ENCODE measurements at regions of chr12 and their contacts with region 1.

Region 1: DNA sequence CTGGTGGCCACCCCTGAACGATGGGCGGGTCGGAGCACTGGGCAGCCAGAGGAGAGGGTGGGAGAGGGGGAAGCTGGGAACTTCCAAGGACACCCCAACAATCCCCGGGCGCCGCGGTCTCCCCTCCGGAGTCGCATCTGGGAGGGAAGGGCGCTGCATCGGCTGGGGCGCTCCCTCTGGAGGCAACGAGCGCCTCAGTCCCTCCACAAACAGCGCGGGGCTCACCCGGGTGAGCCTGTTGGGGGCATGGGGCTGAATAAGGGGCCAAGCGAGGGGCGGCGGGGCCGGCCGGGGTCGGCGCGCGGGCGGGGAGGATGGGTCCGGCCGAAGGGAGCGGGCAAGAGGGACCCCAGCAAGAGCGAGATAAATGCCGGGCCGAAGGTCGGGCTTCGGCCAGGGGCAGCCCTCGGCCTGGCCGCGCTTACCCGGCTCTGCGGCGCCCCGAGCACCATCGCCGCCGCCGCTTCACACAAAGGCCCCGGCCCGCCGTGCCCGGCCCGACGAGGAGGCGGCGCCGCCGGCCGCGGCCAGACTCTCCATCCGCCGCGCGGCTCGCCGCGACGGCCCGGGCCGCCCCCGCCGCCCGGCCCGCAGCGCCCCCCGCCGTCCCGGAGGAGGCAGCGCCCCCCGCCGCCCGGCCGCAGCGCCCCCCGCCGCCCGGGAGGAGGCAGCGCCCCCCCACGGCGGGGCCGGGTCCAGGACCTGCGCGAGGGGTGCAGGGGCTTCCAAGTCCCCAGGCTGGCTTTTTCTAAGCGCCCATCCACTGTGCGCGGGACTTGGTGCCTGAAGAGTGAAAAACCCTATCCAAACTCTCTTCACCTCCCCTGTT is at the start of gene ZBTB39:
- H3K4me3 ChIP-seq: peak within 1 kb of the TSS; percentile 81
- H3K27ac ChIP-seq: peak within 1 kb of the TSS; percentile 54; the same call in 1 of the 2 replicates
- H3K4me1 ChIP-seq: peaks cover 4% of the 10 kb centered on the region; the same call in 1 of the 2 replicates
- CTCF ChIP-seq: peak; percentile 40; the same call in 1 of the 2 replicates

Region 2: GRCh38 chr12:56763753-56764657 is 242.2 kb before region 1 on chr12:
- CTCF ChIA-PET with region 1: interaction called, 117 read pairs
- POLR2A ChIA-PET with region 1: no interaction called
- H3K4me3 ChIP-seq: no peak overlapping the region
- H3K27ac ChIP-seq: no peak overlapping the region
- H3K4me1 ChIP-seq: no peaks in the 10 kb centered on the region
- CTCF ChIP-seq: no peak

Region 3: DNA sequence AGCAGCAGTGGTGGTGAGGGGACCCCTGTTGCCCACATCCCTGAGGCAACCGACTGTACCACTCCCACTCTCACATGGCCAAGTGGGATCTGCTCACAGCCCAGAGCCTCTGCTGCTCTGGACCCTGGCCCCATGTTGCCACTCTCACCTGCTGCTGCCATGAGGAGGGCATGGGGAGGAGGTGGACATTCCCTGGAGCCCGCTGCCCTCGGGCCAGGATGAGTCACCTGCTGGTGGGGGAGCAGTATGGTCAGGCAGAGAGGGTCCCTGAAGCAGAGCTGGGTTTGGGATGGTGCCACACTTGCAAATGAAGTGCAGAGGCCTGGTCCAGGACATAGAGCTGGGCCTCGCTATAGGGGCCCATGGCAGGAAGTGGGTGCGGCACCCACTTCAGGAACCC is 98.1 kb before region 1 on chr12:
- CTCF ChIA-PET with region 1: no interaction called
- POLR2A ChIA-PET with region 1: no interaction called
- H3K4me3 ChIP-seq: no peak overlapping the region
- H3K27ac ChIP-seq: no peak overlapping the region
- H3K4me1 ChIP-seq: no peaks in the 10 kb centered on the region
- CTCF ChIP-seq: no peak

Region 4: DNA sequence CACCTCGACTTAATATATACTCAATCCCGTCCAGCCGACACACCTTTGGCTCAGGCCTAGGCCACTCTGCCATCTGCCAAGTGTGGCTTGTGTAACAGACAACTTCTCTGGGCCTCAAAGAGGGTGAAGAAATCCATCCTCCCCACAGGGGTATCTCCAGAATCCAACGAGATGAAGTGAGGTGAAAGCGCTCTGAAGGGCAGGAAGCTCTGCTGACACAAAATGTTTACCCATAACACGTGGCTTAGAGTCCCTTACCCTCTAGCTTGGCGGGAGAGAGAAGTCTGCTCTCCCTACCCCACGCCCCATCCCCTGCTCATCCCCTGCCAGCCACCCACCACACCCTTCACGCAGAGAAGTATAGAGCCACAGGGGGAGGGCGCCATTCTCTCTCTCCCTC is 12.8 kb before region 1 on chr12:
- CTCF ChIA-PET with region 1: interaction called, 82 read pairs
- POLR2A ChIA-PET with region 1: no interaction called
- H3K4me3 ChIP-seq: no peak overlapping the region
- H3K27ac ChIP-seq: no peak overlapping the region
- H3K4me1 ChIP-seq: no peaks in the 10 kb centered on the region
- CTCF ChIP-seq: no peak

Region 5: DNA sequence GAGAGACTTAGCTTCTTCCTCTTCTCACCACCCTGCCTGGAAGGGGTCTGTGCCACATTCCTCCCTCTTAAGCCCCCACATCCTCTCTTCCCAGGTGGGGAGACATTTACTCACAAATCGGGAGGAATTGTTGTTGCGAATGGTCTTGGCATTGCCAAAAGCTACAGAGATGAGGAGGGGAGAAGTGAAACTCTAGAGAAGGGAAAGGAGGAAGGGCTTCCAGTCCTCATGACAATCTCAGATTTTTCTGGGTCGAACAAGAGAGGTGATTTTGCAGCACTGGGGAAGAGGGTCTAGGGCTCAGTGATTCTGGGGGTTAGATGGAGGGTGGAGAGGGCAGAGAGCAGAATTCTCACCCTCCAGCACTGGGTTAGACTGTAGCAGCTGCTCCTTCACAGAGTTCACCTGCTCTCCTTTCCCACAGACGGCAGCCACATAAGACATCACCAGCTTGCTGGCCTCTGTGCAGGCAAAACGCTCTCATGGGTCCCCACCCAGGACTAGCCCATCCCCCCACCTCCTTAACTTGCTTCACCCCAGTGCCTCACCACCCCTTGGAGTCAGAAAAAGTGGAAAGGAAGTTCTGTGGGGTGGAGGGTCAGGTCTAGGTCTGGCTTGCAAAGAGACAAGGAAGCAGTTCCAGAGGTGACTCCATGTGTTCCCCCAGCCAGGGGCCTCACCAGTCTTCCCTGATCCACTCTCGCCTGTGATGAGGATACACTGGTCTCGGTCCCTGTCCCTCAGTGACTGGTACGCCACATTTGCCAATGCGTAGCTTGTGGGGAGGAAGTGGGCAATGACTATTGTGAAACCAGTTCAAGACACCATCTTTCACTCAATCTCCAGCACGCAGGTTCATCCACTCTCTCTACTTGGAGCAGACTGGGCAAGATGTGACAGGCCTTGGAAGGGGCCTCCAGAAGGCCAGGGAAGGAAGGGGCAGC is 41.0 kb after region 1 on chr12:
- CTCF ChIA-PET with region 1: interaction called, 15 read pairs
- POLR2A ChIA-PET with region 1: no interaction called
- H3K4me3 ChIP-seq: no peak overlapping the region
- H3K27ac ChIP-seq: no peak overlapping the region
- H3K4me1 ChIP-seq: no peaks in the 10 kb centered on the region
- CTCF ChIP-seq: no peak

Region 6: DNA sequence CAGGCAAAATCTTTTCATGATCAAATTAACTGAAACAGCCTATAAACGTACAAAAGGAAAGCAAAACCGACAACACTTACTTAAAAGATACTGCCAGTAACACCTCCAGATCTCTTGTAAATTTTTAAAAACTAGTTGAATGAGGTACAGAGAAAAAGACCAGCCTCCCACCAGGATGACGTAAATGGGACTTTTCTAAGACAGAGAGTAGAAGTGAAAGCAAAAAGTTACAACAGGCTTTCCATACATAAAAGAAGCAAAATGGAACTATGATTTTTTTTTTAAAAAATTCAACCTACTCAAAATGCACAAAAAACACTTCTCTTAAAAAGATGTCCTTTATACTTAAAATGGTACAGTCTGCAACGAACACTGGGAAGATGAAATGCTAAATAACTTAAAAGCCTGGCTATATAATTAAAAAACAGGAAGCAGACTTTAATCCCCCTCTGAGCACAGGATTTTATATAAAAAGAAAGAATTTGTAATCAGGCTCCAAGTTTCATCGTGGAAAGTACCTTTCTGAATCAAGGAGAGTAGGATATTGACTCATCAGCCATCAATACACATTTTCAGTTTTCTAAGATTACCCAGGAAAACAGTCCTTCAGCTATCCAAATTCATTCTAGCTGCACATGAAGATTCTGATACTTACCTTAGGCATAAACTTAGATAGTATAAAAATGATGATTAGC is 57.9 kb after region 1 on chr12:
- CTCF ChIA-PET with region 1: interaction called, 74 read pairs
- POLR2A ChIA-PET with region 1: interaction called, 7 read pairs
- H3K4me3 ChIP-seq: no peak overlapping the region
- H3K27ac ChIP-seq: no peak overlapping the region
- H3K4me1 ChIP-seq: no peaks in the 10 kb centered on the region
- CTCF ChIP-seq: no peak

Region 7: DNA sequence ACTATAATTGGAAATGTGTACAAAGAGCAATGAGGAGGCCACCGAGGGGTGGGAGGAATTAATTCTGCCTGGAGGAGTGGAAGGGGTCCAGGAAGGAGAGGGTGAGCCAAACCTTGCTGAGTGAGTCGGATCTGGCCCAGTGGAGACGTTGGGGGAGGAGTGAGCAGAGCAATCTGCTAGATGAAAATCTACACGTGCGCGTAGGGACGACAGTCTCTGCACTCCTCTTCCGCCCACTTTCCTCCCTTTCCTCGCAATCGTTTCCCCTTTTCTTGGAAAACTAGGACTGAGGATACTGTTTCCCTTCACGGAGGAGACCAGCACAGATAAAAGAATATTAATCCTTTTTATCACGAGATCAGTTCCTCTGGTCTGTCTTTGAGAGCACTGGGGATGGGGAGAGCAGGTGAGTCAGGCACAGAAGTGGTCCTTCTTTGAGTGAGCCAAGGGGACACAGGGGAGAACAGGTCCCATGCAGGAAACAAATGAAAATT is 79.9 kb after region 1 on chr12:
- CTCF ChIA-PET with region 1: no interaction called
- POLR2A ChIA-PET with region 1: no interaction called
- H3K4me3 ChIP-seq: peak overlapping the region; percentile 4; the same call in 1 of the 2 replicates
- H3K27ac ChIP-seq: peak overlapping the region; percentile 86
- H3K4me1 ChIP-seq: peaks cover 12% of the 10 kb centered on the region
- CTCF ChIP-seq: no peak

Region 8: GRCh38 chr12:57101844-57102695 is 95.9 kb after region 1 on chr12:
- CTCF ChIA-PET with region 1: interaction called, 10 read pairs
- POLR2A ChIA-PET with region 1: no interaction called
- H3K4me3 ChIP-seq: no peak overlapping the region
- H3K27ac ChIP-seq: no peak overlapping the region
- H3K4me1 ChIP-seq: no peaks in the 10 kb centered on the region
- CTCF ChIP-seq: no peak